ENCODE measurements at regions of chr1 and their contacts with region 1.

Region 1: DNA sequence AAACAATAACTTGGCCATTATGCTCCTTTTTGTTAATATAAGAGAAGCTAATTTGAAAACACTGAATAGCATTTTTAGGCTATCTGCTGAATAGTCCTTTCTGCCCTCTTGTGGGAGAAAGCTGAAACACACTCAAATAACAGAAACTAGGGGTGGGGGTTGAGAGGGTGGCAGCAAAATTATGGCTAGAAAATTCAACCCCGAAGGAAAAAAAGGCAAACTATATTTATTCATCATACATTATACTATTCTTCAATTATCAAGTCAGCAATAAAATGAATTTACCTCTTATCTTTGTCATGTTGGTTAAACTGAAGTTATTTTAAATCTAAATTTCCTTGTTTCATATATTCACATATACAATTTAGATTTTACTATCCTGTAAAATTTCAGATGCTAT is 255.9 kb downstream of the FAF1 start:
- DNase-seq: peak; percentile 38
- ATAC-seq: peak; percentile 62; the same call in 2 of the 3 replicates
- H3K4me3 ChIP-seq: no peak overlapping the region
- H3K27ac ChIP-seq: no peak overlapping the region
- H3K4me1 ChIP-seq: no peaks in the 10 kb centered on the region
- H3K27me3 ChIP-seq: no peaks in the 10 kb centered on the region
- CTCF ChIP-seq: peak; percentile 61
- EP300 ChIP-seq: no peak
- POLR2A ChIP-seq: no peak
- RAD21 ChIP-seq: no peak

Region 2: DNA sequence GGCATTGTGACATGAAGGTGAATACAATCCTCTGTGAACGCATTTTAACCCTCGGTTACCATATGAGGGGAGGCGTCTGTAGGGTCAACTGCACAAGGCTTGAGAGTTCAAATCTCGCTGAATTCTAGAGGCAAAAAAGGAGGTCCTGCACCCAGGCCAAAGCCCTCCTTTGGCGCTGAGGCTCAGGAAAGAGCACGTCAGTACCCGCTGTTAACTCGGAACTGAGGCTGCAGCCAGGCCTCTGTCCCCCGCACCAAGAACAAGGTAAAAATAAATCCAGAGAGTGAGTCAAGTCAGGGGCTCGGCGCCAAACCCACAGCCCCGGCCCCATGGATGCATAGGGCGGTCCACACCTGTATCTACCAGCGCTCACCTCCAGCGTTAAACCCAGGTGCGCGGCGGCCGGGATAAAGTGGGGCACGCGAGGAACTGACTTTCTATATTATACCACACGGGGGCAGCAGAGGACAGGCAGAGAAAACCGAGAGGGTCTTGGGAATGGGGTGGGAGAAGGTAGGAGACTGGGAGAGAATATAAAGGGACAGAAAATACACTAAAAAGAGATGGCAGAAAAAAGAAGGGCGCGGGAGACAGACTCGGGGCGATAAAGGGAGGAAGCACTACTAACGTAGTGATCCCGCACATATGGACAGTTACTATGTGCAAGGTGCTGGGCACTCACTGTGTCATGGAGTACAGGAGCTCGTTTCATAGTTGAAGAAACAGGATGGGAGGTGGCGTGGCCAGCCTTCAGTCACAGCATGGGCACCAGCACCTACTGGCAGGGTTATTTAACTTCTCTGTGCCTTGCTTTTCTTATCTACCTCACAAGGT is 335.7 kb before region 1 on chr1:
- CTCF ChIA-PET with region 1: interaction called, 28 read pairs
- POLR2A ChIA-PET with region 1: no interaction called
- in situ Hi-C with region 1: loop called (anchors 25 kb)
- intact Hi-C with region 1: loop called (anchors 1 kb)
- DNase-seq: peak; percentile 17
- ATAC-seq: peak; percentile 88
- H3K4me3 ChIP-seq: peak overlapping the region in 1 of 3 experiments; percentile 41; a peak in 1 of 6 replicates
- H3K27ac ChIP-seq: no peak overlapping the region
- H3K4me1 ChIP-seq: no peaks in the 10 kb centered on the region
- H3K27me3 ChIP-seq: peaks cover 0 to 15% of the 10 kb centered on the region in 2 experiments; a peak in 3 of 5 replicates
- CTCF ChIP-seq: peak; percentile 84
- EP300 ChIP-seq: no peak
- POLR2A ChIP-seq: no peak
- RAD21 ChIP-seq: peak; percentile 62; the same call in 1 of the 2 replicates

Region 3: GRCh38 chr1:50620680-50621329 is 83.3 kb before region 1 on chr1:
- CTCF ChIA-PET with region 1: interaction called, 9 read pairs
- POLR2A ChIA-PET with region 1: no interaction called
- in situ Hi-C with region 1: loop called (anchors 25 kb)
- intact Hi-C with region 1: loop called (anchors 1 kb)
- DNase-seq: peak; percentile 45
- ATAC-seq: peak; percentile 93
- H3K4me3 ChIP-seq: no peak overlapping the region
- H3K27ac ChIP-seq: peak overlapping the region; percentile 13
- H3K4me1 ChIP-seq: no peaks in the 10 kb centered on the region; the same call in 1 of the 2 replicates
- H3K27me3 ChIP-seq: no peaks in the 10 kb centered on the region
- CTCF ChIP-seq: peak; percentile 66
- EP300 ChIP-seq: no peak
- POLR2A ChIP-seq: no peak
- RAD21 ChIP-seq: 0 out of 2 replicates have a peak, but pooled peaks have one; percentile 26

Region 4: GRCh38 chr1:50774759-50775351 is 70.7 kb after region 1 on chr1:
- CTCF ChIA-PET with region 1: no interaction called
- POLR2A ChIA-PET with region 1: no interaction called
- in situ Hi-C with region 1: no loop called
- intact Hi-C with region 1: no loop called
- DNase-seq: peak; percentile 63
- ATAC-seq: peak; percentile 59; the same call in 1 of the 3 replicates
- H3K4me3 ChIP-seq: no peak overlapping the region
- H3K27ac ChIP-seq: no peak overlapping the region
- H3K4me1 ChIP-seq: peaks cover 14% of the 10 kb centered on the region
- H3K27me3 ChIP-seq: no peaks in the 10 kb centered on the region
- CTCF ChIP-seq: peak; percentile 76
- EP300 ChIP-seq: no peak
- POLR2A ChIP-seq: no peak
- RAD21 ChIP-seq: peak; percentile 56

Measured in HepG2 (cell line).